ENCODE measurements at regions of chr17 and their contacts with region 1.

Region 1: DNA sequence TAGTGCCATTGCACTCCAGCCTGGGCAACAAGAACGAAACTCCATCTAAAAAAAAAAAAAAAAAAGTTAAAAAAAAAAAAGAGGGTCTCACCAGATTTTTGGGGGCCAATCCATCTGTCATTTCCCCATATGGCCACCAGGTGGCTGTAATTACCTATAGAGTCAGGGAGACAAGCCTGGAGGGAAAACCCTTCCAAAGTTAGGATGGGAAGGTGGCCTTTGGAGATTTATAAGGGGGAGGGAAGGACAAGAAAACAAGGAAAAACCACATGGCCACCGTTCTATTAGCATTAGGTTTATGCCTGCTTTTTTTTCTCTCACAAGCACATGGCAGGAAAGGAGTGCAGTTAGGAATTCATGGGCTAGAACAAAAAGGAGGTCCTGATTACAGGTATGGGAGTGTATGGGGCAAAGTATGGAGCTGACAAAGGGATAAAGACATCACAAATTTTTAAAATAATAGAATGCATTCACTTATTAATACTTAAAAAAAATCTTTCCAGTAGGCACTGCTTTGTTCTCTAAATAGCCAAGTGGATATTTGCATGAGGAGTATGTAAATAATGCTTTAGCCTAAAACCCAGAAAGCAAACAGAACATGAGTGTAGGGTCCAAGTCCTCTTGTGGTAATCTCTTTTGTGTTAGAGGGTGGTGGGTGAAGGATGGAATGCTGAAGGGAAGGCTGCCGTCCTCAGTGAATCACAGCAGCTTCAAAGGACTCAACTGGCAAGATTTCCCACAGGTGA is 5.1 kb downstream of the CYB5D1 start:
- DNase-seq: peak in 1 of 2 donors; percentile 62
- ATAC-seq: no peak
- H3K4me3 ChIP-seq: no peak overlapping the region
- H3K27ac ChIP-seq: no peak overlapping the region
- H3K4me1 ChIP-seq: peaks cover 0 to 26% (median 14%) of the 10 kb centered on the region in 9 donors
- H3K27me3 ChIP-seq: no peaks in the 10 kb centered on the region
- CTCF ChIP-seq: peak; percentile 65 to 83 (median 81)

Region 2: DNA sequence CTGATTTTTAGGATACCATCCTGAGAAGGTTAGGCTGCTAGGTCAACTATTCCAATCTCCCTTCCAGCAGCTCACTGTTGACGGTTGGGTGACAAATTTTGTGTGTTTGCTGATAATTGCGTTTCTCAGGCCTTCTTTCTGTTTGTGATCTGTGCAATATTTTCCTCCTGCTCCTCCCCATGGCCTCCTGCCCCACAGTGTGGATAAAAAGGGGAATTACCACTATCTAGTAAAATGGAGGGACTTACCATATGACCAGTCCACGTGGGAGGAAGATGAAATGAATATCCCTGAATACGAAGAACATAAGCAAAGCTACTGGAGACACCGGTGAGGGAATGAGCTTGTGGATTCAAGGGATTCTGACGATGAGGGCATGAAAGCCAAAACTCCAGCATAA is 34.9 kb after region 1 on chr17:
- intact Hi-C with region 1: loop called in 8 of 10 experiments (anchors 2 to 5 kb)
- DNase-seq: no peak
- ATAC-seq: peak in 7 of 8 donors; percentile 63 to 86 (median 74)
- H3K4me3 ChIP-seq: no peak overlapping the region
- H3K27ac ChIP-seq: peak overlapping the region in 1 of 10 donors; percentile 1
- H3K4me1 ChIP-seq: peaks cover 0 to 9% (median 0%) of the 10 kb centered on the region in 9 donors
- H3K27me3 ChIP-seq: no peaks in the 10 kb centered on the region
- CTCF ChIP-seq: peak; percentile 20 to 63 (median 52)

Region 3: DNA sequence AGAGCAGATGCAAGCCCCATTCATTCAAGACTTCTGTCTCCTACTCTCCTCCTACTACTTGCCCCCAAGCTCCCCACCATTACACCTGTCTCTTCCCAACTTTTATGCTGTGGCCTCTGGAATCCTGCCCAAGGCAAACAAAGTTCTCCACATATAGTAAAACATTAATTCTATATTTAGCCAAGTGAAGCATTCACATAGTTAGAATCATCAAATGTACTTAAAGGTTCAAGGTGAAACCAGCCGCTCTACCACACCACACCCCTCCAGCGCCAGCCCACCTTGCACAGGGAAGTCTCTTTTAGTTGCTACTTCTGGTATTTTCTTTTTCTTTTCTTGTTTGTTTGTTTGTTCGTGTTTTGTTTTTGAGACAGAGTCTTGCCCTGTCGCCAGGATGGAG is 114.2 kb after region 1 on chr17:
- intact Hi-C with region 1: loop called in 1 of 10 experiments (anchors 5 kb)
- DNase-seq: no peak
- ATAC-seq: no peak
- H3K4me3 ChIP-seq: no peak overlapping the region
- H3K27ac ChIP-seq: no peak overlapping the region
- H3K4me1 ChIP-seq: peaks cover 0 to 2% (median 0%) of the 10 kb centered on the region in 9 donors
- H3K27me3 ChIP-seq: peaks cover 0 to 14% (median under 1%) of the 10 kb centered on the region in 7 donors
- CTCF ChIP-seq: no peak

Measured in heart right ventricle (tissue), 16 donors.